ENCODE measurements at regions of chr5 and their contacts with region 1.

Region 1: GRCh38 chr5:171997024-171997423 is 9.4 kb downstream of the FBXW11 start:
- DNase-seq: no peak
- H3K4me3 ChIP-seq: no peak overlapping the region
- CTCF ChIP-seq: no peak

Region 2: DNA sequence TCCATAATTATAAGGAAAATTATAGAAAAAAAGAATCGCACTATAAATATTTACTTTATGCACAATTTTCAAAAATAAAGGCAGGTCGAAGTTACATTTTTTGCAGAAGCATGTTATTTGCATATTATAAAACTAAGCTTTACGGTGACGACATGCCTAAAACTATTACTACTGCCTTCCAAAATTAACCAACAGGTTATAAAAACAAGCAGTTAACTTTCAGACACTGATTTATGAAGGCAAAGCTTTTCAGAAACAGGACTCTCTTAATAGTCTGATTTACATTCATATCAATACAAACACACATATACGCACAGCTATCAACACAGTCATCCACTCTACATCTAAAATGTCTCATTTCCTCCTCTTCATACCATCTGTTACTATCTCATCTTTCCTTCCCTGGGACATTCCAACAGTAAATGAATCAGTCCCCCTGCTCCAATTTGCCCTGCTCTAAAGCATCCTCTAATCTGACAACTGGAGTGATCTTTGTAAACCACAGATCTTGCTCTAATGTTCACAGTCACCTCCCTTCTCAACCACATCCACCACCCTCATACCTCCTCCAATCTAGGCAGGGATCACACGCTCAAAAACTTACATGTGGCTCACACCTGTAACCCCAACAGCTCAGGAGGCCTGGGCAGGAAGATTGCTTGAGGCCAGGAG is 12.1 kb before region 1 on chr5:
- CTCF ChIA-PET with region 1: interaction called, 10 read pairs
- POLR2A ChIA-PET with region 1: no interaction called
- DNase-seq: peak; percentile 61
- H3K4me3 ChIP-seq: no peak overlapping the region
- CTCF ChIP-seq: no peak